ENCODE measurements at regions of chr1 and their contacts with region 1.

Region 1: DNA sequence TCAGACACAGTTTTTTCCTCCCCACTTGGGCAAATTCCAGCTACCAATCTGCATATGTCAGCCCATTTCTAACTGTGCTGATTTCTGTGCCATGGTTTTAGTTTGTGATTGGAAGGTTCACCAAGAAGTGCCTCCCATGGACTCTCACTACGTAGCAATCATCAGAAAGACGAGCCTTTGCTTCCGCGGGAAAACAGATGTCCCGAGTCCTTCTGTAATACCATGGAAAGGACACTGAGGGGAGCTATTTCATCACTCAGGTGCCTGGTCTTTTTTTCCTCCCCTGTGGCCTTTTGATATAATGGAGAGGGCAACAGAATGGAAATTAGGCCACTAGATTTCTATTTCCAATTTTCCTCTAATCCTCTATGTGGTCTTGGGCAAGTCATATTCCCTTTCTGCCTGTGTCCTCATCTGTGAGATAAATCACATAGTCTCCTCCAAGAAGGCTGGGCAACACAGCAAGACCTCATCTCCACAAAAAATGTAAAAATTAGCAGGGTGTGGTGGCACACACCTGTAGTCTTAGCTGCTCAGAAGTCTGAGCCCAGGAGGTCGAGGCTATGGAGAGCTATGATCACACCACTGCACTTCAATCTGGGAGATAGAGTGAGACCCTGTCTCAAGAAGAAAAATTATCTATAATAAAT is 24.8 kb downstream of the LEMD1 start:
- DNase-seq: peak; percentile 65
- ATAC-seq: peak; percentile 47
- H3K4me3 ChIP-seq: no peak overlapping the region
- H3K4me3 Mint-ChIP-seq: no peak overlapping the region
- H3K27ac ChIP-seq: no peak overlapping the region
- H3K27ac Mint-ChIP-seq: no peak overlapping the region
- H3K4me1 ChIP-seq: peaks cover 0 to 2% of the 10 kb centered on the region in 2 donors
- H3K4me1 Mint-ChIP-seq: no peaks in the 10 kb centered on the region
- H3K27me3 ChIP-seq: peaks cover 0 to 7% (median 0%) of the 10 kb centered on the region in 4 experiments
- H3K27me3 Mint-ChIP-seq: peaks cover 18% of the 10 kb centered on the region
- CTCF ChIP-seq: peak; percentile 79

Region 2: GRCh38 chr1:205042911-205043806 is 353.9 kb before region 1 on chr1 and contains the start of gene CNTN2:
- CTCF ChIA-PET with region 1: no interaction called
- POLR2A ChIA-PET with region 1: no interaction called
- intact Hi-C with region 1: no loop called
- DNase-seq: no peak
- ATAC-seq: no peak
- H3K4me3 ChIP-seq: no peak within 1 kb of the TSS
- H3K4me3 Mint-ChIP-seq: no peak within 1 kb of the TSS
- H3K27ac ChIP-seq: no peak within 1 kb of the TSS
- H3K27ac Mint-ChIP-seq: no peak within 1 kb of the TSS
- H3K4me1 ChIP-seq: no peaks in the 10 kb centered on the region
- H3K4me1 Mint-ChIP-seq: no peaks in the 10 kb centered on the region
- H3K27me3 ChIP-seq: peaks cover 0 to 47% (median 11%) of the 10 kb centered on the region in 4 experiments
- H3K27me3 Mint-ChIP-seq: peaks cover 63% of the 10 kb centered on the region
- CTCF ChIP-seq: no peak
- total RNA-seq, gene CNTN2: not detected in 2 replicates

Region 3: DNA sequence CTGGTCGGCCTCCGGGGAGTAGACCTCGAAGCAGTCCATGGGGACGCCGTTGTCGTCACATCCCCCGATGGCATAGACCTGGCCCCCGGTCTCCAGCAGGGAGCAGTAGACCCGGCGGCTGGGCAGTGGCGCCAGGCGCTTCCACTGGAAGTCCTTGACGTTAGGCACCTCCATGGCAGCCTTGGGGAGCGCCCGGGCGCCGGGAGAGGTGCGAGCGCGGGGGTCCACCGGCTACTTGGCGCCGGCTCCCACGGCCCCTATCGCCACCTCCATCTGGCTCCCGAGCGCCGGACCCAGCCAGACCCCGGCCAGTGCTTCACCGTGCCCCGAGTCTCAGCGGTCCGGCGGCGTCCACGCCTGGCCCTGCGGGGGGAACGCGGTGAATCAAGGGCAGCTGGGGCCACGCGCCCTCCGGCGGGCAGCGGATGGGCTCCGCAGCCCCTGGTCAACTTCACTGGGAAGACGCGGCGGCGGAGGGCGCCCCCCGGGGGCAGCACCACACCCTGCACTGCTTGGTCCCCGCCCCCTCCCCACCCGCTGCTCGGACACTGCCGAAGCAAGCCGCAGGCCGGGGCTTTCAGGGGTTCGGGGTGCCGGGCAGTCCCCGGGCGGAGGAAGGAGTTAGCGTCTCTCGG is 53.5 kb before region 1 on chr1:
- CTCF ChIA-PET with region 1: no interaction called
- POLR2A ChIA-PET with region 1: no interaction called
- intact Hi-C with region 1: no loop called
- DNase-seq: peak; percentile 54
- ATAC-seq: peak; percentile 42
- H3K4me3 ChIP-seq: peak overlapping the region in 4 of 5 experiments; percentile 37 to 51 (median 50)
- H3K4me3 Mint-ChIP-seq: peak overlapping the region; percentile 84
- H3K27ac ChIP-seq: no peak overlapping the region
- H3K27ac Mint-ChIP-seq: no peak overlapping the region
- H3K4me1 ChIP-seq: peaks cover 27 to 34% of the 10 kb centered on the region in 2 donors
- H3K4me1 Mint-ChIP-seq: peaks cover 41% of the 10 kb centered on the region
- H3K27me3 ChIP-seq: peaks cover 0 to 20% (median 10%) of the 10 kb centered on the region in 4 experiments
- H3K27me3 Mint-ChIP-seq: peaks cover 8% of the 10 kb centered on the region
- CTCF ChIP-seq: no peak

Region 4: GRCh38 chr1:205430696-205431305 is 33.7 kb after region 1 on chr1:
- CTCF ChIA-PET with region 1: interaction called, 11 read pairs
- POLR2A ChIA-PET with region 1: no interaction called
- intact Hi-C with region 1: no loop called
- DNase-seq: peak; percentile 88
- ATAC-seq: peak; percentile 91
- H3K4me3 ChIP-seq: peak overlapping the region; percentile 23 to 54 (median 46)
- H3K4me3 Mint-ChIP-seq: peak overlapping the region; percentile 80
- H3K27ac ChIP-seq: peak overlapping the region; percentile 4 to 43
- H3K27ac Mint-ChIP-seq: peak overlapping the region; percentile 70
- H3K4me1 ChIP-seq: peaks cover 25 to 33% of the 10 kb centered on the region in 2 donors
- H3K4me1 Mint-ChIP-seq: peaks cover 39% of the 10 kb centered on the region
- H3K27me3 ChIP-seq: no peaks in the 10 kb centered on the region
- H3K27me3 Mint-ChIP-seq: no peaks in the 10 kb centered on the region
- CTCF ChIP-seq: peak; percentile 70

Region 5: GRCh38 chr1:205477759-205478247 is 80.7 kb after region 1 on chr1:
- CTCF ChIA-PET with region 1: interaction called, 18 read pairs
- POLR2A ChIA-PET with region 1: no interaction called
- intact Hi-C with region 1: no loop called
- DNase-seq: no peak
- ATAC-seq: no peak
- H3K4me3 ChIP-seq: no peak overlapping the region
- H3K4me3 Mint-ChIP-seq: no peak overlapping the region
- H3K27ac ChIP-seq: no peak overlapping the region
- H3K27ac Mint-ChIP-seq: no peak overlapping the region
- H3K4me1 ChIP-seq: peaks cover 26 to 29% of the 10 kb centered on the region in 2 donors
- H3K4me1 Mint-ChIP-seq: peaks cover 27% of the 10 kb centered on the region
- H3K27me3 ChIP-seq: peaks cover 0 to 35% (median 10%) of the 10 kb centered on the region in 4 experiments
- H3K27me3 Mint-ChIP-seq: peaks cover 24% of the 10 kb centered on the region
- CTCF ChIP-seq: no peak

Measured in B cell (primary cell).